Caco-2 (cell line): ENCODE measurements at regions of chr18 and their contacts with region 1.

Region 1: DNA sequence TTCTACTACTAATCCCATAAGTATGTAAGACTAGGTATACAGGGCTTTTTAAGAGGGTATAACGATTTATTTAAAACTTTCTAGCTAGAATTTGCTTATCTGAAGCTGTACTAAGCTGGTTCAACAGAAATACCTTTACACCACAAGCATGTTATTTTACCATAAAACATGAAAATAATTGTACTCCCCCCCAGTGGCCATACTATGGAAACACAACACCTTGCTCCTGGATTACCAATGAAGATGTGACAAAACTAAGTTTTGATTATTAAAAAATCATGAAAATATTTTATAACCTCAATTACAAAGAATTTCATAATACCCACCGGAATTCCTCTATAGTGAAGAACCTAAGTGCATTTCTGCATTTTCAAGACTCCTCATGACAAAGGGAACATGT is 27.3 kb downstream of the LPIN2 start:
- DNase-seq: peak in 1 of 2 experiments; percentile 44
- H3K4me3 ChIP-seq: no peak overlapping the region
- H3K4me3 Mint-ChIP-seq: no peak overlapping the region
- H3K27ac Mint-ChIP-seq: no peak overlapping the region
- H3K4me1 ChIP-seq: peaks cover 52% of the 10 kb centered on the region
- H3K4me1 Mint-ChIP-seq: peaks cover 39% of the 10 kb centered on the region
- H3K27me3 ChIP-seq: no peaks in the 10 kb centered on the region
- H3K27me3 Mint-ChIP-seq: no peaks in the 10 kb centered on the region
- CTCF ChIP-seq: peak; percentile 46 to 56

Region 2: DNA sequence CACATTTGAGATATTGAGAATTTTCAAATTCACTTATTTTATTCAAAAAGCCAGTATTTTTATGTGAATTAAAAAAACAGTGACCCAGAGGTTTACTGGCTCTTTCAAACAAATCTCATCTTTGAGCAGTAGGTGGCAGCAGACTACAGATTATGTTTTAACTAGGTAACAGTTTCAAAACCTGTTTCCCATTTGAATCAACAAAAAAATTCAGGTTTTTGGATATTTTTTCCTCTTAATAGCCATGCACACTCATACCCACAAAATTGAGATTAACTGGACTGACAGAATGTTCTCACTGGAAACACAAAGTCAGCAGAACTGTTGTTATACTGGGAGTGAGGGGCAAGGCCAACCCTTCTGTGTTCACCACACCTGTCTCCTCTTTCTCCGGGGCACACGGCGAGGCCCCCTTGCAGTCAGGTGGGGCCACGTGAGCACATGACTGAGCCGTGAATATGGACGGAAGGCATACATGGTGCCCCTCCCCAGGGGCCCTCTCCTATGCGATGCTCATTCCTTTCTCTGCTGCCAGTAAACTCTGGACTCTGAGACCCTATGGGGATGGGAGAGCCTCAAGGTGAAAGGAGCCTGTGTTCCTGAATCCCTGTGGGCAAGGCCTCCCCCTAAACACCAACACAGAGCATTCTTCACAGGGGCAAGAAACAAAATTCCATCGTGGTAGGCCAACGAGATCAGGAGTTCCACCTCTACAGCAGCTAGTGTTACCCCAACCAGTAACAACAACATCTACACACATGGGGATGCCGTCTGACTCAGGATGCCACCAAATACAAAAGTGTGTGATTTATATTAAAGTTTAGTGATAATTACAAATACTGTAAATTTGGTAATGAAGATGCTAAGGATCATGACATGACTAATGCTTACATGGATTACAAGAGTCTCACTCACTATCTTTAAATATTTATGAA is 53.1 kb before region 1 on chr18:
- CTCF ChIA-PET with region 1: no interaction called
- POLR2A ChIA-PET with region 1: no interaction called
- intact Hi-C with region 1: loop called (anchors 1 kb)
- DNase-seq: peak in 1 of 2 experiments; percentile 68
- H3K4me3 ChIP-seq: no peak overlapping the region
- H3K4me3 Mint-ChIP-seq: no peak overlapping the region
- H3K27ac Mint-ChIP-seq: no peak overlapping the region
- H3K4me1 ChIP-seq: no peaks in the 10 kb centered on the region
- H3K4me1 Mint-ChIP-seq: peaks cover 6% of the 10 kb centered on the region
- H3K27me3 ChIP-seq: no peaks in the 10 kb centered on the region
- H3K27me3 Mint-ChIP-seq: no peaks in the 10 kb centered on the region
- CTCF ChIP-seq: peak; percentile 73 to 75

Region 3: GRCh38 chr18:2939317-2939716 is 46.3 kb before region 1 on chr18:
- CTCF ChIA-PET with region 1: interaction called, 3 read pairs
- POLR2A ChIA-PET with region 1: no interaction called
- intact Hi-C with region 1: loop called (anchors 1 kb)
- DNase-seq: peak; percentile 76 to 87
- H3K4me3 ChIP-seq: no peak overlapping the region
- H3K4me3 Mint-ChIP-seq: peak overlapping the region; percentile 45
- H3K27ac Mint-ChIP-seq: no peak overlapping the region
- H3K4me1 ChIP-seq: peaks cover 22% of the 10 kb centered on the region
- H3K4me1 Mint-ChIP-seq: no peaks in the 10 kb centered on the region
- H3K27me3 ChIP-seq: no peaks in the 10 kb centered on the region
- H3K27me3 Mint-ChIP-seq: no peaks in the 10 kb centered on the region
- CTCF ChIP-seq: no peak

Region 4: DNA sequence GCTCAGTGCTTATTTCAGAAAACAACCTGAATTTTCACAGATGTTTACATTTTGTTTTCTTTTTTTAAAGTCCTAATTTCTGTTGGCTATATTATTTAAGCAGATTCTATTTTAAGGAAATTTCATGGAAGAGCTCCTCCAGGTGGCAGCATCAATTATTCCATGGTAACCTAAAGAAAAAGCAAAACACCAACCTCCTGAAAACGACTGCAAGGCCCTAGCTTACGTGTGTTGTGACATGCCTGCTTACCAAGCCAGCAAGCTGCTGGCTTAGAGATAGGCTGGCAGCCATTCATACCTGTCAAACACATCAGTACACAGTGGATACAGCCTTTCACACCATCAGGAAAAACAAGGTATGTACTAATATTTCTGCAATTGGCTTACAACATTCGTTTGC is 37.6 kb before region 1 on chr18:
- CTCF ChIA-PET with region 1: interaction called, 12 read pairs
- POLR2A ChIA-PET with region 1: no interaction called
- intact Hi-C with region 1: no loop called
- DNase-seq: no peak
- H3K4me3 ChIP-seq: no peak overlapping the region
- H3K4me3 Mint-ChIP-seq: no peak overlapping the region
- H3K27ac Mint-ChIP-seq: no peak overlapping the region
- H3K4me1 ChIP-seq: no peaks in the 10 kb centered on the region
- H3K4me1 Mint-ChIP-seq: no peaks in the 10 kb centered on the region
- H3K27me3 ChIP-seq: no peaks in the 10 kb centered on the region
- H3K27me3 Mint-ChIP-seq: no peaks in the 10 kb centered on the region
- CTCF ChIP-seq: peak; percentile 21 to 53

Region 5: GRCh38 chr18:2967357-2967756 is 18.3 kb before region 1 on chr18:
- CTCF ChIA-PET with region 1: interaction called, 4 read pairs
- POLR2A ChIA-PET with region 1: no interaction called
- intact Hi-C with region 1: loop called (anchors 2 kb)
- DNase-seq: no peak
- H3K4me3 ChIP-seq: no peak overlapping the region
- H3K4me3 Mint-ChIP-seq: no peak overlapping the region
- H3K27ac Mint-ChIP-seq: no peak overlapping the region
- H3K4me1 ChIP-seq: peaks cover 18% of the 10 kb centered on the region
- H3K4me1 Mint-ChIP-seq: peaks cover 9% of the 10 kb centered on the region
- H3K27me3 ChIP-seq: no peaks in the 10 kb centered on the region
- H3K27me3 Mint-ChIP-seq: no peaks in the 10 kb centered on the region
- CTCF ChIP-seq: no peak

Region 6: GRCh38 chr18:3186678-3187658 is 201.3 kb after region 1 on chr18:
- CTCF ChIA-PET with region 1: no interaction called
- POLR2A ChIA-PET with region 1: no interaction called
- intact Hi-C with region 1: no loop called
- DNase-seq: peak; percentile 57 to 64
- H3K4me3 ChIP-seq: no peak overlapping the region
- H3K4me3 Mint-ChIP-seq: no peak overlapping the region
- H3K27ac Mint-ChIP-seq: no peak overlapping the region
- H3K4me1 ChIP-seq: no peaks in the 10 kb centered on the region
- H3K4me1 Mint-ChIP-seq: peaks cover 12% of the 10 kb centered on the region
- H3K27me3 ChIP-seq: no peaks in the 10 kb centered on the region
- H3K27me3 Mint-ChIP-seq: no peaks in the 10 kb centered on the region
- CTCF ChIP-seq: peak; percentile 35 to 50